Astrocyte of the cerebellum (primary cell): ENCODE measurements at regions of chr12 and their contacts with region 1.

Region 1: GRCh38 chr12:91382081-91382543 is 199.5 kb upstream of the DCN start:
- DNase-seq: peak; percentile 66
- H3K4me3 ChIP-seq: peak overlapping the region; percentile 43
- CTCF ChIP-seq: peak; percentile 90

Region 2: GRCh38 chr12:91811481-91812287 is 429.6 kb after region 1 on chr12:
- in situ Hi-C with region 1: loop called (anchors 25 kb)
- DNase-seq: peak; percentile 43
- H3K4me3 ChIP-seq: no peak overlapping the region
- CTCF ChIP-seq: peak; percentile 79

Region 3: GRCh38 chr12:92566448-92567019 is 1184.4 kb after region 1 on chr12:
- in situ Hi-C with region 1: loop called (anchors 5 kb)
- DNase-seq: no peak
- H3K4me3 ChIP-seq: no peak overlapping the region
- CTCF ChIP-seq: no peak